ENCODE measurements at regions of chr2 and their contacts with region 1.

Region 1: DNA sequence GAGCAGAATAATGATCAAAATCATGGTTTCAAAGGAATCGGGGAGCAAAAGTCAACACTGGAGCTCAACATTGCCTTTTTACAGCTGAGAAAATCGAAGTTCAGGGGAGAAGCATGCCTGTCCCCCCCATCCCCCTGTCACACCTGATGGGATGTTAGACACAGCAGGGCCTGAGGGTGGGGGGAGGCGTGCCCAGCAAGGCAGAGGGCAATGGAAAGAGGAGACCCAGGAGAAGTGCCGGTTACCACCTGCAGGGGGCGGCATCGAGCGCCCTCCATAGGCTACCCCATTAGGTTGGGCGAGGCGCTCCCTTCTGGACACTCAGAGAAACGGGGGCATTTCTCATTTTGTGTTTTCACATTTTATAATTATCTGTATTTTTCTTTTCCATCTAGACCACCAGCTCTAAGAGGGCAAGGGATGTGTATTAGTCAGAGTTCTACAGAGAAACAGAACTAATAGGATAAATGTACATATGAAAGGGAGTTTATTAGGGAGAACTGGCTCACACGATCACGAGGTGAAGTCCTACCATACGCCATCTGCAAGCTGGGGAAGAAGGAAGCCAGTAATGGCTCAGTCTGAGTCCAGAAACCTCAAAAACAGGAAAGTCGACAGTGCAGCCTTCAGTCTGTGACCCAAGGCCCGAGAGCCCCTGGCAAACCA is 271.3 kb downstream of the LRATD1 start:
- DNase-seq: peak; percentile 69 to 77
- H3K4me3 ChIP-seq: no peak overlapping the region
- H3K4me3 Mint-ChIP-seq: no peak overlapping the region
- H3K27ac Mint-ChIP-seq: no peak overlapping the region
- H3K4me1 ChIP-seq: no peaks in the 10 kb centered on the region
- H3K4me1 Mint-ChIP-seq: no peaks in the 10 kb centered on the region
- H3K27me3 ChIP-seq: no peaks in the 10 kb centered on the region
- H3K27me3 Mint-ChIP-seq: no peaks in the 10 kb centered on the region
- CTCF ChIP-seq: peak; percentile 80 to 94

Region 2: GRCh38 chr2:14634201-14634884 is 269.5 kb before region 1 on chr2:
- CTCF ChIA-PET with region 1: no interaction called
- POLR2A ChIA-PET with region 1: no interaction called
- intact Hi-C with region 1: loop called (anchors 10 kb)
- DNase-seq: peak; percentile 62 to 72
- H3K4me3 ChIP-seq: peak overlapping the region; percentile 21
- H3K4me3 Mint-ChIP-seq: peak overlapping the region; percentile 63
- H3K27ac Mint-ChIP-seq: no peak overlapping the region
- H3K4me1 ChIP-seq: peaks cover 20% of the 10 kb centered on the region
- H3K4me1 Mint-ChIP-seq: no peaks in the 10 kb centered on the region
- H3K27me3 ChIP-seq: peaks cover 15% of the 10 kb centered on the region
- H3K27me3 Mint-ChIP-seq: peaks cover 22% of the 10 kb centered on the region
- CTCF ChIP-seq: peak; percentile 46

Region 3: DNA sequence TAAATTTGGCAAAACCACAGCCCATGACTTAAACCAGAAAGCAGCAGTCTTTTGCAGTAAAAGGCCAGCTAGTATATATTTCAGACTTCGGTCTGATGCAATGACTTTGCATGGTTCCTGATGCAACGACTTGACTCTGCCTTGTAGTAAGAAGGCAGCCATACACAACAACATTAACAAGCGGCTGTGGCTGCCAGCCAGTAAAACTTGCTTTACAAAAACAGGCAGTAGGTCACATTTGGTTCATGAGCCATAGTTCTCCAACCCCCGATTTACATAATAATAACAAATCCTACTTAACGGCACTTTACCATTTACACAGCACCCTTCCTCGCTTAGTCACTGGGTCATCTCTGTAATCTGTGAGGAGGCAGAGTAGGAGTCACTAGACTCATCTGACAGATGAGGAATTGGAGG is 139.0 kb after region 1 on chr2:
- CTCF ChIA-PET with region 1: no interaction called
- POLR2A ChIA-PET with region 1: no interaction called
- intact Hi-C with region 1: no loop called
- DNase-seq: no peak
- H3K4me3 ChIP-seq: no peak overlapping the region
- H3K4me3 Mint-ChIP-seq: no peak overlapping the region
- H3K27ac Mint-ChIP-seq: no peak overlapping the region
- H3K4me1 ChIP-seq: no peaks in the 10 kb centered on the region
- H3K4me1 Mint-ChIP-seq: no peaks in the 10 kb centered on the region
- H3K27me3 ChIP-seq: no peaks in the 10 kb centered on the region; the same call in 1 of the 2 replicates
- H3K27me3 Mint-ChIP-seq: peaks cover 6% of the 10 kb centered on the region
- CTCF ChIP-seq: no peak

Region 4: GRCh38 chr2:15122915-15123314 is 219.1 kb after region 1 on chr2:
- CTCF ChIA-PET with region 1: no interaction called
- POLR2A ChIA-PET with region 1: no interaction called
- intact Hi-C with region 1: no loop called
- DNase-seq: no peak
- H3K4me3 ChIP-seq: no peak overlapping the region
- H3K4me3 Mint-ChIP-seq: no peak overlapping the region
- H3K27ac Mint-ChIP-seq: no peak overlapping the region
- H3K4me1 ChIP-seq: 0 out of 2 replicates have a peak, but pooled peaks cover 3% of the 10 kb centered on the region
- H3K4me1 Mint-ChIP-seq: peaks cover 15% of the 10 kb centered on the region
- H3K27me3 ChIP-seq: no peaks in the 10 kb centered on the region
- H3K27me3 Mint-ChIP-seq: no peaks in the 10 kb centered on the region
- CTCF ChIP-seq: no peak

Region 5: GRCh38 chr2:15159751-15160177 is 255.9 kb after region 1 on chr2:
- CTCF ChIA-PET with region 1: no interaction called
- POLR2A ChIA-PET with region 1: no interaction called
- intact Hi-C with region 1: loop called (anchors 10 kb)
- DNase-seq: peak in 1 of 2 experiments; percentile 35
- H3K4me3 ChIP-seq: no peak overlapping the region
- H3K4me3 Mint-ChIP-seq: no peak overlapping the region
- H3K27ac Mint-ChIP-seq: no peak overlapping the region
- H3K4me1 ChIP-seq: peaks cover 1% of the 10 kb centered on the region; the same call in 1 of the 2 replicates
- H3K4me1 Mint-ChIP-seq: no peaks in the 10 kb centered on the region
- H3K27me3 ChIP-seq: no peaks in the 10 kb centered on the region
- H3K27me3 Mint-ChIP-seq: no peaks in the 10 kb centered on the region
- CTCF ChIP-seq: peak; percentile 34 to 41